ENCODE measurements at regions of chr15 and their contacts with region 1.

Region 1: DNA sequence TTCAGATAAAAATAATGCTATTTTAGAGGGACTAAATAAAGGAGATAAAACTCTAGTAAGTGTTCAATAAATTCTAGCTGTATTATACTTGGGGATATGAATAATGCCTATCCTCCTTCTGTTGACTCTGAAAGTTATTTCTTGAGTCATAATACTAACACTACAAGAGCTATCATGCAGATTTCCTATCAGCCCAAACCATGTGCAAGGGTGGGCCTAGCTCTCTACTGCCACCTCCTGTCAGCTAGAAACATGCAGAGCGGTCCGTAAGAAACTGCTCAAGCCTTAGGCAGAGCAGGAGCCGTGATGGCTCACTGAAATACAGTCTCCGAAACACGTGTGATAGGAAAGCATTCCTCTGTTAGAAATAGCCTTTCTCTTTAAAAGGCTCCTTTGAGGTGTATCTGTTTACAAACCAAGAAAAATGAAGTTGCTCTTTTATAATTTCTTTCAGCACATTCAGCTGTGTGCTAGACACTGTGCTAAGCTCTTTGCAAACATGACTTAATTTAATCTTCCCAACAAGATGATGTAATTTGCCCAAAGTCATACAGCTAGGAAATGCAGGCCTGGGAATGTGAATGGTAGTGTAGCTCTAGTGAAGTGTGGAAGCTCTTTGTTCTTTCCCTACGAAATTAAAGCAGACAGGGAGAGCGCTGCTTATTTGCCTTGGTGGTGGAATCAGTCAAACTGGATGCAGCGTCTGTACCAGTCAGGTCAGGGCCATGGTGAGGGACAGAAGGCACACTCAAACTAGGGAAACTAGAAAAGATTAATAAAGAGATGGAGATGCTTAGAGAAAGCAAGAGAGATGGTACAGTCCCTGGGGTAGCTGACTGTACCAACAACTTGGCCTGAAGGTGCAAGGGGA is 43.1 kb downstream of the MTHFS start:
- DNase-seq: peak; percentile 68
- H3K4me3 Mint-ChIP-seq: no peak overlapping the region
- H3K27ac Mint-ChIP-seq: no peak overlapping the region
- H3K4me1 Mint-ChIP-seq: peaks cover 18% of the 10 kb centered on the region
- H3K27me3 Mint-ChIP-seq: no peaks in the 10 kb centered on the region

Region 2: DNA sequence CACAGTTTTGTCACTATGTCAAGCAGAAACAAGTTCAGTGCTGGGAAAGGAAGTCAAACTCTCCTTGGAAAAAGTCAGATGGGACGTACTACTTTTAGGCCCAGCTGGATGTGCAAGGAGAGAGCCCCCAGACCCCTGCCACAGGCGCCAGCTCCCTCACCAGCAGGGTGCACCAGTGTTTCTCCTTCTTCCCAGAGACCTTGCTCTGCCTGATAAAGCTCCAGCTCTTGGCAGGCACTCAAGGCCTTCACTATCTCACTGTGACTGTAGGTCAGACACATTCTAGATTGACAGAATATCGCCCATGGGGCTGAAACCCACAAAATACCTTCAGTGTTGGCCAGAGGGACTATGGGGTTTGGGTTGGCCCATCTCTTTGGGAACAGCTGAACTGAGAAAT is 1157.8 kb before region 1 on chr15:
- CTCF ChIA-PET with region 1: no interaction called
- POLR2A ChIA-PET with region 1: no interaction called
- DNase-seq: no peak
- H3K4me3 Mint-ChIP-seq: no peak overlapping the region
- H3K27ac Mint-ChIP-seq: no peak overlapping the region
- H3K4me1 Mint-ChIP-seq: no peaks in the 10 kb centered on the region
- H3K27me3 Mint-ChIP-seq: peaks cover 30% of the 10 kb centered on the region

Region 3: DNA sequence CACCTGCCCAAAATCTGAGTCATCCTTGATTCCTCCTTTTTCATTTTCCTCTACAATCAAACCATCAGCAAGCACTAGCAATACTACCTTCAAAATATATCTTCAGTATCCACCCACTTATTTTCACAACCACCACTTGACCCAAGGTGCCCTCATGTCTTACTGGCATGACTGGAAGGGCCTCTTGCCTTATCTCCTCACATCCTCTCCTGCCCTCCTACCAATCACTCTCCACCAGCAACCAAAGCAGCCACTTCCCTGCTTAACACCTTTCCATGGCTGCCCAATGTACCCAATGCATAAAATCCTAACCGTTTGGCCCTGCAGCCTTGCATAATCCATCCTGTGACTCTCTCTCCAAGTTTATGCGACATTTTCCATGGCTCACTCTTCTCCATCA is 32.9 kb before region 1 on chr15:
- CTCF ChIA-PET with region 1: no interaction called
- POLR2A ChIA-PET with region 1: no interaction called
- DNase-seq: no peak
- H3K4me3 Mint-ChIP-seq: no peak overlapping the region
- H3K27ac Mint-ChIP-seq: no peak overlapping the region
- H3K4me1 Mint-ChIP-seq: no peaks in the 10 kb centered on the region
- H3K27me3 Mint-ChIP-seq: no peaks in the 10 kb centered on the region

Region 4: GRCh38 chr15:79863886-79864285 is 10.2 kb after region 1 on chr15:
- CTCF ChIA-PET with region 1: interaction called, 16 read pairs
- POLR2A ChIA-PET with region 1: no interaction called
- DNase-seq: no peak
- H3K4me3 Mint-ChIP-seq: no peak overlapping the region
- H3K27ac Mint-ChIP-seq: no peak overlapping the region
- H3K4me1 Mint-ChIP-seq: no peaks in the 10 kb centered on the region
- H3K27me3 Mint-ChIP-seq: no peaks in the 10 kb centered on the region